B cell (primary cell): ENCODE measurements at regions of chr12 and their contacts with region 1.

Region 1: DNA sequence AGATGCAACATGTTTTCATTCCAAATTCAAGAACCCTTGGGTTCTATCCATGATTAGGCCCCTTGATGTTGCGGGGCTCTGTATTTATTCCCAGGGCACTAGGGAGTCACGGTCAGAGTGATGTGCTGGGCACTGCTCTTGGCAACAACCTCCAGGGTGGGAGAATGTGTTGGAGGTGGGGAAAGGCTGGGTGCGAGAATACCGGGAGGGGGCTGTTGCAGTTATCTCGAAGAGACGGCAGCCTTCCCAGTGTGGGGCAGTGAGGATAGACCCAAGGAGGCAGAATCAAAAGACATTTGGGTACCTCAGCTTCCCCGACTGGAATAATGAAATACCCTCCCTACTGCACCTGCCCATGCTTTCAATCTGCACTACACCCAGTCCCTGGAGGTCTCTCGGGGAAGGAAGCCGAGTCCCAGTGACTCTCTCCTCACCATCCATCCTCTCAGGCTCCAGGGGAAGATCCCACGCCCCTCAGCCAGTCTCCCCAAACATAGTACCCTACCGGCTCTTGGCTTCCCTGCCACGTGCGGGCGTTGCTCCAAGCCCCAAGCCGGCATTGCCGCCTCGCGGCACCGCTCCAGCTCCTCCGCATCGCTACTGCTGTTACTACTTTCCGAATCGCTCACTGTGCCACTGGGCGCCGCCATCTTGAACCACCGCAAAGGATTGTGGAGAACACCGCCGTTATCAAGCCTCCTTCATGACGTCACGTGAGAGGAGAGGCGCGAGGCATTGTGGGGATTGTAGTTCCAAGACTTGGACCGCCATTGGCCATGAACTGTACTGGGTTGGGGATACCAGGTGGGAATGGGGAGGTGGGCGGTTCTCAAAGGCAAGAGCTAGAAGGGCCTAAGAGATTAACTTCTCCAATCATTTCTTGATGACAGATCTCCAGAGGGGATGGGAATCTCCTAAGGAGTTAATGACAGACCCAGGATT is at the start of gene C12orf43:
- DNase-seq: peak; percentile 92
- ATAC-seq: peak; percentile 99
- H3K4me3 ChIP-seq: peak within 1 kb of the TSS; percentile 86 to 100 (median 96)
- H3K4me3 Mint-ChIP-seq: peak within 1 kb of the TSS; percentile 96
- H3K27ac ChIP-seq: peak within 1 kb of the TSS; percentile 61 to 74
- H3K27ac Mint-ChIP-seq: peak within 1 kb of the TSS; percentile 84
- H3K4me1 ChIP-seq: peaks cover 4 to 7% of the 10 kb centered on the region in 2 donors
- H3K4me1 Mint-ChIP-seq: peaks cover 14% of the 10 kb centered on the region
- H3K27me3 ChIP-seq: no peaks in the 10 kb centered on the region
- H3K27me3 Mint-ChIP-seq: no peaks in the 10 kb centered on the region
- CTCF ChIP-seq: no peak
- total RNA-seq, gene C12orf43: 18.9 and 20.5 TPM in 2 replicates

Region 2: GRCh38 chr12:120618954-120619615 is 397.0 kb before region 1 on chr12:
- CTCF ChIA-PET with region 1: no interaction called
- POLR2A ChIA-PET with region 1: no interaction called
- intact Hi-C with region 1: no loop called
- DNase-seq: no peak
- ATAC-seq: no peak
- H3K4me3 ChIP-seq: no peak overlapping the region
- H3K4me3 Mint-ChIP-seq: no peak overlapping the region
- H3K27ac ChIP-seq: no peak overlapping the region
- H3K27ac Mint-ChIP-seq: no peak overlapping the region
- H3K4me1 ChIP-seq: no peaks in the 10 kb centered on the region
- H3K4me1 Mint-ChIP-seq: no peaks in the 10 kb centered on the region
- H3K27me3 ChIP-seq: peaks cover 0 to 32% (median 10%) of the 10 kb centered on the region in 4 experiments
- H3K27me3 Mint-ChIP-seq: peaks cover 29% of the 10 kb centered on the region
- CTCF ChIP-seq: no peak

Region 3: GRCh38 chr12:121038861-121039666 is 23.0 kb after region 1 on chr12 and contains the start of gene OASL:
- CTCF ChIA-PET with region 1: no interaction called
- POLR2A ChIA-PET with region 1: no interaction called
- intact Hi-C with region 1: loop called (anchors 1 kb)
- DNase-seq: peak; percentile 75
- ATAC-seq: peak; percentile 94
- H3K4me3 ChIP-seq: peak within 1 kb of the TSS; percentile 46 to 72 (median 66)
- H3K4me3 Mint-ChIP-seq: peak within 1 kb of the TSS; percentile 95
- H3K27ac ChIP-seq: peak within 1 kb of the TSS in 1 of 2 donors; percentile 51
- H3K27ac Mint-ChIP-seq: peak within 1 kb of the TSS; percentile 76
- H3K4me1 ChIP-seq: peaks cover 20 to 22% of the 10 kb centered on the region in 2 donors
- H3K4me1 Mint-ChIP-seq: peaks cover 20% of the 10 kb centered on the region
- H3K27me3 ChIP-seq: peaks cover 0 to 46% (median 16%) of the 10 kb centered on the region in 4 experiments
- H3K27me3 Mint-ChIP-seq: peaks cover 52% of the 10 kb centered on the region
- CTCF ChIP-seq: no peak
- total RNA-seq, gene OASL: 1.1 and 1.3 TPM in 2 replicates

Region 4: GRCh38 chr12:121060149-121061001 is 44.3 kb after region 1 on chr12:
- CTCF ChIA-PET with region 1: interaction called, 5 read pairs
- POLR2A ChIA-PET with region 1: no interaction called
- intact Hi-C with region 1: loop called (anchors 1 kb)
- DNase-seq: peak; percentile 82
- ATAC-seq: peak; percentile 96
- H3K4me3 ChIP-seq: peak overlapping the region; percentile 47 to 65 (median 60)
- H3K4me3 Mint-ChIP-seq: peak overlapping the region; percentile 91
- H3K27ac ChIP-seq: peak overlapping the region; percentile 47 to 82
- H3K27ac Mint-ChIP-seq: peak overlapping the region; percentile 96
- H3K4me1 ChIP-seq: peaks cover 6 to 17% of the 10 kb centered on the region in 2 donors
- H3K4me1 Mint-ChIP-seq: peaks cover 11% of the 10 kb centered on the region
- H3K27me3 ChIP-seq: no peaks in the 10 kb centered on the region
- H3K27me3 Mint-ChIP-seq: no peaks in the 10 kb centered on the region
- CTCF ChIP-seq: peak; percentile 70

Region 5: DNA sequence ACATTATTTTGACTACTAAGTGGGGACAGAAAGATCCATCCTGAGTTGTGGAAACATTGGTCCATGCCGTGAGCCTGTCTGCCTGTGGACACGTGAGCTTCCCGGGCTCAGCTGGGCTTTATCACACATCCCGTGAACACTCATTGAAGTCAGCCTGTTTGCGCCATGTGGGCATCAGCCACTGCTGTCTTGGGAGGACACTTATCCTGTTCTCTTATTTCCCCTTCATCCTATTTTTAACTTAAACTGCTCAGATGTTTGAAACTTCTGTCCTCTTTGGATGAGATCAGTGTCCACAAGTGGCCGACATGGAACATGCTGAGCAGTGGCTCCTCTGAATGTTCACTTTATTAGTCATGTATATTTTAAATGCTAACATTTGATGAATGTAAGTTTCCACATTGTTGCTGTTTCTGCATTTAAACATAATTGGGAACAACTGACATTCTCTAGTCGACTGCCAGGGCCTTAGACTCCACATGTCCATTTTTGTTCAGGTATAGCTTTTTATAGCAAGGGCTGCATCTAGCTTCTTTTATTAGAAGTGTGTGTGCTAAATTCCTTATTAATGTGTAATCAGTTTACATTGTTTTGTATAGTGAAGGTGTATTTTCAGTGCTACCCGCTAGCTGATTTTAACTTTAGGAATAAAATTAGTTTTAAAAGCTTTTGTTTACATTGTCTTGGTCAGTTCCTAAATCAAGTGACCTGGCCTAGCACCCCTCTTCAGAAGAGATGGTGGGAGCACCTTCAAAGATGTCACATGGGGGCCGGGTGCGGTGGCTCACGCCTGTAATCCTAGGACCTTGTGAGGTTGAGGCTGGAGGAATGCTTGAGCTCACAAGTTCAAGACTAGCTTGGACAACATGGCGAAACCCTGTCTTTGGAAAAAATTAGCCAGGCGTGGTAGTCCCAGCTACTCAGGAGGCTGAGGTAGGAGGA is 407.9 kb after region 1 on chr12:
- CTCF ChIA-PET with region 1: no interaction called
- POLR2A ChIA-PET with region 1: no interaction called
- intact Hi-C with region 1: no loop called
- DNase-seq: no peak
- ATAC-seq: no peak
- H3K4me3 ChIP-seq: no peak overlapping the region
- H3K4me3 Mint-ChIP-seq: no peak overlapping the region
- H3K27ac ChIP-seq: no peak overlapping the region
- H3K27ac Mint-ChIP-seq: peak overlapping the region; percentile 59
- H3K4me1 ChIP-seq: peaks cover 12 to 25% of the 10 kb centered on the region in 2 donors
- H3K4me1 Mint-ChIP-seq: peaks cover 20% of the 10 kb centered on the region
- H3K27me3 ChIP-seq: no peaks in the 10 kb centered on the region
- H3K27me3 Mint-ChIP-seq: no peaks in the 10 kb centered on the region
- CTCF ChIP-seq: no peak